ENCODE measurements at regions of chr22 and their contacts with region 1.

Region 1: GRCh38 chr22:41285820-41286638 is at the start of gene RANGAP1:
- DNase-seq: peak; percentile 99
- H3K4me3 Mint-ChIP-seq: peak within 1 kb of the TSS; percentile 94
- H3K27ac Mint-ChIP-seq: peak within 1 kb of the TSS; percentile 97
- H3K4me1 Mint-ChIP-seq: peaks cover 28% of the 10 kb centered on the region
- H3K27me3 Mint-ChIP-seq: no peaks in the 10 kb centered on the region
- total RNA-seq, gene RANGAP1: 185 and 187 TPM in 2 replicates

Region 2: GRCh38 chr22:40856513-40857308 is 429.3 kb before region 1 on chr22 and contains the starts of genes ST13 and XPNPEP3:
- intact Hi-C with region 1: loop called (anchors 2 kb)
- DNase-seq: peak; percentile 99
- H3K4me3 Mint-ChIP-seq: peak within 1 kb of the TSS; percentile 96
- H3K27ac Mint-ChIP-seq: peak within 1 kb of the TSS; percentile 100
- H3K4me1 Mint-ChIP-seq: peaks cover 42% of the 10 kb centered on the region
- H3K27me3 Mint-ChIP-seq: peaks cover 2% of the 10 kb centered on the region
- total RNA-seq, gene ST13: 210 and 215 TPM in 2 replicates
- total RNA-seq, gene XPNPEP3: 17.6 and 17.7 TPM in 2 replicates

Region 3: DNA sequence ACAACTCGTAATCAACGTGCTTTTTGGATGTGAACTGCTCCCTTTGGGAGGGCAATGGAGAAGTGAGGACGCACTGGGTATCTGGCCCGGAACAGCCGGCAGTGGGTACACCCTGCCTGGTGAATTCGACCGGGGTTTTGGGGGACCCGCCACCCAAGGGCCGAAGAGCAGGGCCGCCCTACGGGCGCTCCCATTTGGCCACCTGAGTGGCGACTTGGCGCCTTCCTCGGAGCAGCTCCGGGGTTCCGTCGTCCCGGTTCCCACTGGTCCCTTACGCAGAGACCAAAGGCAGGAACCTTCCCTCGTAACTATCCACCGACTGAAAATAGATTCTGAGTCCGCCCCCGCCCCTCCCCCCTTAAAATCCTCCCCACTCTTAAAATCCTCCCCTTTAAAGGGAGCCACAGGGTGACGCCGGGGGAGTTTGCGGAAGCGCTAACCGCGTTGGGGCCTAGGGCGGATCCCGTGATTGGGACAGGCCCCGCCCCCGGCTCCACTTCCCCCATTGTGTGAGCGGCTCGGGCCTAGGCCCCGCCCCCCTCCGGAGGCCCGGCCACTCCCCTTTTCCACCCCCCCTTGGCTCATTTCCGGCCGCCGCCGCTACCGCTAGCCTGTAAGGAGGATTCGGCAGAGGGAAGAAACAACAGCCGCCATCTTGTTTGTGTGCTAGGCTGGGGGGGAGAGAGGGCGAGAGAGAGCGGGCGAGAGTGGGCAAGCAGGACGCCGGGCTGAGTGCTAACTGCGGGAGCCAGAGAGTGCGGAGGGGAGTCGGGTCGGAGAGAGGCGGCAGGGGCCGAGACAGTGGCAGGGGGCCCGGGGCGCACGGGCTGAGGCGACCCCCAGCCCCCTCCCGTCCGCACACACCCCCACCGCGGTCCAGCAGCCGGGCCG is 194.7 kb before region 1 on chr22:
- intact Hi-C with region 1: loop called (anchors 1 kb)
- DNase-seq: peak; percentile 99
- H3K4me3 Mint-ChIP-seq: peak overlapping the region; percentile 90
- H3K27ac Mint-ChIP-seq: peak overlapping the region; percentile 99
- H3K4me1 Mint-ChIP-seq: peaks cover 26% of the 10 kb centered on the region
- H3K27me3 Mint-ChIP-seq: no peaks in the 10 kb centered on the region

Region 4: DNA sequence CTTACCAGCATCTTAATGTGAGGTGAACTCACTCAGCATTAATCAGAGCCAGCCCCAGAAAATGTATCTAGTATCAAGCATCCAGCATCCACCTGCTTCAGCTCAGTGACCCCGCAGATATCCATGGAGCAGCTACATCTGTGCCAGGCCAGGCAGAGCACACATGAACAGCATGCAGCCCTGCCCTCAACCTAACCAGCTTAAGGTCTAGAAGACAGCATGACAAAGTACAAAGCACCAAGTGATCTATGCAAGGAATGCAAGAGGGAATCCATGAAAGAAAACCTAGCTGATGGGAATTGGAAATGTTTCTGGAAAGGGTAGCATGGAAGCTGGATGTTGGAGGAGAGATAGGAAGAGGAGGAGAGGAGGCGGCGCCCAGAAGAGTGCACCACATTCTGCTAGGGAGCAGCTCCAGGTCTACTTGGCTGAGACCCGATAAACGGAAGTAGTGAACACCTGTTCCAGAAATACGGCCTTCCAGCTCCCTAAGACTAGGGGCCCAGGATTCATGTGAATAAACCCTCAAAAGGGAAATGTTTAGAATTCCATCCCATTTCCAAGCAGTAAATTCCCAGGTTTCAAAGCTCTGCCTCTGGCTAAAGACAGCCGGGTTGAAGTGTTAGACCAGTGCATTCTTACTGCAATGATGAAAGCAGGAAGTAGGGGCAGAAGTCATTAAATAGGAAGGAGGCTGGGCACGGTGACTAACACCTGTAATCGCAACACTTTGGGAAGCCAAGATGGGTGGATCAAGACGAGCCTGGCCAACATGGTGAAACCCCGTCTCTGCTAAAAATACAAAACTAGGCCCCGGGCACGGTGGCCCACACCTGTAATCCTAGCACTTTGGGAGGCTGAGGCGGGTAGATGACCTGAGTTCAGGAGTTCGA is 104.4 kb before region 1 on chr22:
- intact Hi-C with region 1: no loop called
- DNase-seq: no peak
- H3K4me3 Mint-ChIP-seq: no peak overlapping the region
- H3K27ac Mint-ChIP-seq: no peak overlapping the region
- H3K4me1 Mint-ChIP-seq: peaks cover 5% of the 10 kb centered on the region
- H3K27me3 Mint-ChIP-seq: no peaks in the 10 kb centered on the region

Region 5: GRCh38 chr22:41245917-41246499 is 40.0 kb before region 1 on chr22:
- intact Hi-C with region 1: no loop called
- DNase-seq: no peak
- H3K4me3 Mint-ChIP-seq: no peak overlapping the region
- H3K27ac Mint-ChIP-seq: peak overlapping the region; percentile 48
- H3K4me1 Mint-ChIP-seq: no peaks in the 10 kb centered on the region
- H3K27me3 Mint-ChIP-seq: no peaks in the 10 kb centered on the region

Region 6: DNA sequence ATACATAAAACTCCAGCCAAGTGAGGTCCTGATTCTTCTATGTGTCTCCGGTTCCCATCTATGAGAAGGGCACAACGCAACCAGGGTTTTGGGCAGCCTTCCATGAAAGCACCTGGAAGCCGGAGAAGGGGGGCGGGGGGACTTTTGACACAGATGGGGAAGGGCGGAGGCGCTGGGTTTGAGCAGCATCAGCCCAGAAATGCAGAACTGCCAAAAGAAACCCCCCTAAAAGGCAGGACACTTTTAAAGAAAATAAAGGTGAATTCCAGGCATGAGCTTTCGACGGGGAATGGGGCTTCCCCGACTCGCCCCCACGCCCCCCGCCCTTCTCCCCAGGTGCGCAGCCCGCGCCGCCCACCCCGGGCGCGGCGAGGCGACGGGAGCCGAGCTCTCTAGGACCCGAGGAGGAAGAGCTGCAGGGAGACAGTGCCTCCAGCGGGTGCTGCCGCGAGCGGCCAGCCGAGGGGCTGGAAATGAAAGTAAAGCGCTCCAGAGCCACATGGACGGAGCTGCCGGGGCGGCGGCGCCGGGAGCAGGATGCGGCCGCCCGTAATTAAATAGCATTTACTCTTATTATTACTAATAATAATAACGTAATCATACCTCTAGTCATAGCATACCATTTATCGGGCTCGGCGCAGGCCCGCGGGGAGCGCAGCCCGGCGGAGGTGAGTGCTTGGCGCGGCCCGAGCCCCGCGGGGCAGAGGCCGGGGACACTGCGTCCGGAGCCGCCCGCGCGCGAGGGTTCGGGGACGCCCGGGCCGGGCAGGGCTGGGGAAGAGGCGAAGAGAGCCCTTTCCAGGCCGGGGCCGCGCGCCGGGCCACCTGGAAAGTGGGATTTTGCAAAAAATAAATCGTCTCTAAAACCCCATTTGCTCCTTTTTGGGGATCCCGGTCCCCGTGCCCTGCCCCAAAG is 15.3 kb after region 1 on chr22 and contains the start of gene ZC3H7B:
- intact Hi-C with region 1: loop called (anchors 1 kb)
- DNase-seq: peak; percentile 95
- H3K4me3 Mint-ChIP-seq: peak within 1 kb of the TSS; percentile 82
- H3K27ac Mint-ChIP-seq: peak within 1 kb of the TSS; percentile 86
- H3K4me1 Mint-ChIP-seq: peaks cover 26% of the 10 kb centered on the region
- H3K27me3 Mint-ChIP-seq: no peaks in the 10 kb centered on the region
- total RNA-seq, gene ZC3H7B: 69.1 and 70.5 TPM in 2 replicates

Region 7: DNA sequence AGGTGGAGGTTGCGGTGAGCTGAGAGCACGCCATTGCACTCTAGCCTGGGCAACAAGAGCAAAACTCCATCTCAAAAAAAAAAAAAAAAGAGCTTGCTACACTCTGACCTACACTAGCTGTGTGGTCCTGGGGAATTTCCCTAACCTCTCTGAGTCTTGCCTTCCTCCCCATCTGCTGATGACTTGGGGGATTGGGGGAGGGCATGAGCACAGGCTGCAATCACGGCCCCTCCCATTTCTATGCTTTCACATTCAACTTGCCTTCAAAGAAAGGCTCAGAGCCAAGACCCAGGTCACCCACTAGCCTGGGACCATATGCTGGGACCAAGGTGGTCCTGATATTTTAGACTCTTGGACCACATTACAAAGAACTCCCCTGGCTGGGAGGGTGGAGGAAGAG is 56.0 kb after region 1 on chr22:
- intact Hi-C with region 1: no loop called
- DNase-seq: peak; percentile 83
- H3K4me3 Mint-ChIP-seq: no peak overlapping the region
- H3K27ac Mint-ChIP-seq: peak overlapping the region; percentile 37
- H3K4me1 Mint-ChIP-seq: peaks cover 5% of the 10 kb centered on the region
- H3K27me3 Mint-ChIP-seq: no peaks in the 10 kb centered on the region

Region 8: DNA sequence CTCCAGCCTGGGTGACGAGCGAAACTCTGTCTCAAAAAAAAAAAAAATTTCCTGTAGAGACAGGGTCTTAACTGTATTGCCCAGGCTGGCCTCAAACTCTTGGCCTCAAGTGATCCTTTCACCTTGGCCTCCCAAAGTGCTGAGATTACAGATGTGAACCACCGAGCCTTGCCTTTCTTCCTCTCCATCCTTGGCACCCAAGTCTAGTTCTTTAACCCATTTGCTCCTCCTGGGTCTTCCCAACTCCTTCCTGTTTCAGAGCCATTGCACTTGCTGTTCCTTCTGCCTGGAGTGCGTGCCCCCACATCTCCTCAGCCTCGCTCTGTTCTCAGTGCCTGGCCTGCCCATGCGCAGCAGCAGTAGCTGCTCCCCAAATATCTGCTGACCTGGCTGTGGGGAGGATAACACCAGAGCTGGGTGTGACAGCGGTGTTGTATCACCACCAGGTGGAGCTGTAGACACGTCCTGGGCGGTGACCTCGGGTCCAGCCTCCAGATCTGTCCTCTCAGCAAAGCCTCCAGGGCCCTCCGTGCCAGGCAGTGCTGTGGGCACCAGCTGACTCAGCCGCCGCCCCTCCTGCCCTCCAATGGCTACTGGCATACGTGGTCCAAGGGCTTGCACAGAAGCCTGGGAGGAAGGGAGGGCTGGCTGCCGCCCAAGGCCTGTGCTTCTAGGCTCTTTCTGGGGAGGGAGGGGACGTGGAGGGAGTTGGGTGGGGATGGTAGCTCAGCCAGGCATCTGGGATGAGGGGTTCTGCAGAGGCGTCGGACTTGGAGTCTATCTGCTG is 117.7 kb after region 1 on chr22:
- intact Hi-C with region 1: no loop called
- DNase-seq: peak; percentile 96
- H3K4me3 Mint-ChIP-seq: no peak overlapping the region
- H3K27ac Mint-ChIP-seq: peak overlapping the region; percentile 23
- H3K4me1 Mint-ChIP-seq: peaks cover 11% of the 10 kb centered on the region
- H3K27me3 Mint-ChIP-seq: no peaks in the 10 kb centered on the region

Region 9: DNA sequence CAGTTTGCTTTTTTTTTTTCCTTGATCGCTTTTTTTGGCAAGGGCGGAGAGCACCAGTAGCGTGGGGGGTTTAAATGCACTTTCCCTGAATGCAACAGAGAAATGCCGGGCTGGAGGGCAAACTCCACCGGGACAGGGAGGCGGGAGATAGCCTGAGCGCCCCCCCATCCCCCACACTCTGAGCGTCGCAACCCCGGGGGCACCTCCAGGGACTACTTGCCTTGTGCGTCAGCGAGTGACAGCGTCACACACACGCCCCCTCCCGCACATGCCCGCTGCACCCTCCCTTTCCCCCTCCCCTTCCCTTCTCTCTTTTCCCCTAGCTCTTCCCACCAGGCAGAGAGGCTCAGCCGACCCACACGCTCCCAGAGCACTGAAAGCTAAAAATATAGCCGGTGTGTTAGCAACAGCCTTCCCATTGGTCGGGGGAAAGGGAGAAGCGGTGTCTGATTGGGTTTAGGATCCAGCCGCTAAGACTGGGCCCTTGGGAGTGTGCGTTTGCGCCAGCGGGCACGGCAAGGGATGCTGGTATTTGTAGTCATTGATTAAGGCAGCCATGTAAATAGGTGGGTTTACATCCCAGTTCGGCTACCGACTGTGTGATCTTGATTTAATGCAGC is 162.3 kb after region 1 on chr22:
- intact Hi-C with region 1: loop called (anchors 1 kb)
- DNase-seq: peak; percentile 97
- H3K4me3 Mint-ChIP-seq: peak overlapping the region; percentile 96
- H3K27ac Mint-ChIP-seq: peak overlapping the region; percentile 95
- H3K4me1 Mint-ChIP-seq: peaks cover 21% of the 10 kb centered on the region
- H3K27me3 Mint-ChIP-seq: no peaks in the 10 kb centered on the region

Region 10: GRCh38 chr22:41543854-41544670 is 258.0 kb after region 1 on chr22 and contains the start of gene POLR3H:
- intact Hi-C with region 1: loop called (anchors 5 kb)
- DNase-seq: peak; percentile 99
- H3K4me3 Mint-ChIP-seq: peak within 1 kb of the TSS; percentile 95
- H3K27ac Mint-ChIP-seq: peak within 1 kb of the TSS; percentile 89
- H3K4me1 Mint-ChIP-seq: peaks cover 29% of the 10 kb centered on the region
- H3K27me3 Mint-ChIP-seq: no peaks in the 10 kb centered on the region
- total RNA-seq, gene POLR3H: 49.2 and 50.6 TPM in 2 replicates

Measured in activated CD4-positive, alpha-beta T cell treated with anti-CD3 and anti-CD28 coated beads, Interleukin-2, amount 10 ng/mL, durations not matched to agents 24 days and 14 days (primary cell).